ENCODE measurements at regions of chr2 and their contacts with region 1.

Region 1: GRCh38 chr2:200703127-200703925 is 108.4 kb upstream of the BZW1 start:
- DNase-seq: peak; percentile 77
- ATAC-seq: peak; percentile 64
- H3K4me3 ChIP-seq: no peak overlapping the region; a peak in 1 of 6 replicates
- H3K27ac ChIP-seq: peak overlapping the region; percentile 53
- H3K4me1 ChIP-seq: peaks cover 27% of the 10 kb centered on the region
- H3K27me3 ChIP-seq: no peaks in the 10 kb centered on the region
- CTCF ChIP-seq: peak; percentile 70
- EP300 ChIP-seq: no peak
- POLR2A ChIP-seq: no peak
- RAD21 ChIP-seq: peak; percentile 73

Region 2: GRCh38 chr2:199973703-199974102 is 729.6 kb before region 1 on chr2:
- CTCF ChIA-PET with region 1: interaction called, 5 read pairs
- POLR2A ChIA-PET with region 1: no interaction called
- in situ Hi-C with region 1: loop called (anchors 10 kb)
- intact Hi-C with region 1: loop called (anchors 1 kb)
- DNase-seq: peak; percentile 46
- ATAC-seq: peak; percentile 79
- H3K4me3 ChIP-seq: no peak overlapping the region
- H3K27ac ChIP-seq: no peak overlapping the region
- H3K4me1 ChIP-seq: peaks cover 26% of the 10 kb centered on the region
- H3K27me3 ChIP-seq: no peaks in the 10 kb centered on the region
- CTCF ChIP-seq: peak; percentile 83
- EP300 ChIP-seq: no peak
- POLR2A ChIP-seq: no peak
- RAD21 ChIP-seq: peak; percentile 71

Region 3: DNA sequence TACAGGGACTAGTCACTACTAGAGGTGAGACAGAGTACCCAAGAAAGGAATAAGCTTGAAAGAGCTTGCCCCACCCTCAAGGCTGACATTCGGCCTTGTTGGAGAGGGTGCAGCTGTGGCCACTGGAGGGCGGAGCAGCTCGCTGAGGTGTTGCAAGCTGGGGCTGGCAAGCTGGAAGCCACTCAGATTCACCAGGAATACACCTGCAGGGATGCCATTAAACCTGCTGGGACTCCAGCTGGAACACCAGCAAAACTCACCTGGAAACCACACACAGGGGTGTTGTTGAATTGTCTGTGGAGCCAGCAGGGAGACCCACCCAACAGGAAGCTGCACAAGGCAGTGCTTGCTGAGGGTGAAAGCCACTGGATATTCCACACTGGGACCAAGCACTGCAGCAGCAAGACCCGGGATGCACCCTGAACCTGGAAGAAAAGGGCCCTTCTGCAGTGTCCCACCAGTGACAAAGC is 219.6 kb before region 1 on chr2:
- CTCF ChIA-PET with region 1: interaction called, 6 read pairs
- POLR2A ChIA-PET with region 1: interaction called, 3 read pairs
- in situ Hi-C with region 1: loop called (anchors 10 kb)
- intact Hi-C with region 1: loop called (anchors 1 kb)
- DNase-seq: peak; percentile 64
- ATAC-seq: peak; percentile 86
- H3K4me3 ChIP-seq: no peak overlapping the region
- H3K27ac ChIP-seq: no peak overlapping the region
- H3K4me1 ChIP-seq: peaks cover 68% of the 10 kb centered on the region
- H3K27me3 ChIP-seq: no peaks in the 10 kb centered on the region
- CTCF ChIP-seq: peak; percentile 90
- EP300 ChIP-seq: 0 out of 4 replicates have a peak, but pooled peaks of 1 of the 2 experiments have one; percentile 30
- POLR2A ChIP-seq: peak in 1 of 2 experiments; percentile 45; a peak in 2 of 4 replicates
- RAD21 ChIP-seq: peak; percentile 62

Region 4: DNA sequence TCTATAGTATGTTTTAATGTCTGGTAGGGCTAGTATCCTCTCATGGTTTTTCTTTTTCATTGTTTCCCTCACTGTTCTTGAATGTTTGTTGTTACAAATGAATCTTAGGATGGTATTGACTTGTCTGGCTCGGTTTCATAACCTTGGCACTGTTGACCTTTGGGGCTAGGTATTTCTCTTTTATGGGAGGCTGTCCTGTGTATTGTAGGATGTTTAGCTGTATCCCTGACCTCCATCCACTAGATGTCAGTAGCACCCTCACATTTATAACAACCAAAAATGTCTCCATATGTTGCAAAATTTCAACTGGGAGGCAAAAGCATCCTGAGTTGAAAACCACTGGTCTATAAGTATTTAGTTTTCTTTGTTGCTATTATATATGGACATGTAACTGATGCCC is 124.5 kb before region 1 on chr2:
- CTCF ChIA-PET with region 1: interaction called, 43 read pairs
- POLR2A ChIA-PET with region 1: no interaction called
- in situ Hi-C with region 1: loop called (anchors 5 kb)
- intact Hi-C with region 1: loop called (anchors 1 kb)
- DNase-seq: peak; percentile 83
- ATAC-seq: peak; percentile 100
- H3K4me3 ChIP-seq: no peak overlapping the region
- H3K27ac ChIP-seq: no peak overlapping the region
- H3K4me1 ChIP-seq: peaks cover 8% of the 10 kb centered on the region
- H3K27me3 ChIP-seq: no peaks in the 10 kb centered on the region
- CTCF ChIP-seq: peak; percentile 88
- EP300 ChIP-seq: peak in 1 of 2 experiments; percentile 44; a peak in 1 of 4 replicates
- POLR2A ChIP-seq: no peak
- RAD21 ChIP-seq: peak; percentile 84

Region 5: GRCh38 chr2:200742426-200742825 is 39.1 kb after region 1 on chr2:
- CTCF ChIA-PET with region 1: no interaction called
- POLR2A ChIA-PET with region 1: no interaction called
- in situ Hi-C with region 1: loop called (anchors 5 kb)
- intact Hi-C with region 1: loop called (anchors 5 kb)
- DNase-seq: no peak
- ATAC-seq: peak; percentile 6; the same call in 1 of the 3 replicates
- H3K4me3 ChIP-seq: no peak overlapping the region
- H3K27ac ChIP-seq: peak overlapping the region; percentile 69
- H3K4me1 ChIP-seq: peaks cover 49% of the 10 kb centered on the region
- H3K27me3 ChIP-seq: peaks cover 0 to 16% of the 10 kb centered on the region in 2 experiments; a peak in 2 of 5 replicates
- CTCF ChIP-seq: no peak
- EP300 ChIP-seq: no peak
- POLR2A ChIP-seq: no peak
- RAD21 ChIP-seq: no peak

Region 6: DNA sequence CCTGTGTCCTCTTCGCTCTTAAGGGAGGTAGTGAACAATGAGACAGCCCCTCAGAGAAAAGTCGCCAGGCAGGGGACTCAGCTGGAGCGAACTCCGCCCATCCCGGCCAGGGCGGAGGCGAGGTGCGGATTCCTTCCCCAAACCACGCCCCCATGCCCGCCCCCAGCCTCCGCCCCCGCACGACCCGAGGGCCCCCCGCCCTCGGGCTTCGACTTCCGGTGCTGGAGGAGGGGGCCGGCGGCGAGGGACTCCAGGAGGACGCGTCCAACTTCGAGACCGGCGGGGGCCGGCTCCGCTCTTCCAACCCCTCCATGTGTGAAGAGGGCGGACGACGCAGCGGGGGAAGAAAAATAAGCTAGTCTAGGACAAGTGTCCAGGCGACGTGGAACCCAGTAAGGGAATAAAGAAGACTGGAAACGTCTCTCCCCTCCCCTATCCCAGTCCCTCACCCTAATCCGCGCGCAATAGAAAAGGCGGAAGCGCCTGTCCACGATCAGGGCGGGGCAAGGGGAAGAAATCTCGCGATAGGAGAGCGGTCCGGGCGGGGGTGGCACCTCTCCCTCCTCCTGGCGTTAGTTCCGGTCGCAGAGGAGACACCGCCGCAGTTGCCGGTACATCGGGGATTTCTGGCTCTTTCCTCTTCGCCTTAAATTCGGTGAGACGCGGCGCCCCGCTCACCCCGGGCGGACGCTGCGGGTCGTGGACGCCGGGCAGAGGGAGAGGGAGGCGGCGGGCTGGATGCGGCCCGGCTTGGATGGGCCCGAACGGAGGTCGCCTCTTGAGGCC is 108.2 kb after region 1 on chr2 and contains the start of gene BZW1:
- CTCF ChIA-PET with region 1: no interaction called
- POLR2A ChIA-PET with region 1: no interaction called
- in situ Hi-C with region 1: no loop called
- intact Hi-C with region 1: no loop called
- DNase-seq: peak; percentile 95
- ATAC-seq: peak; percentile 89
- H3K4me3 ChIP-seq: peak within 1 kb of the TSS; percentile 89 to 99 (median 92)
- H3K27ac ChIP-seq: peak within 1 kb of the TSS; percentile 95
- H3K4me1 ChIP-seq: peaks cover 52% of the 10 kb centered on the region
- H3K27me3 ChIP-seq: no peaks in the 10 kb centered on the region; a peak in 1 of 5 replicates
- CTCF ChIP-seq: no peak; the same call in 1 of the 2 replicates
- EP300 ChIP-seq: peak in 1 of 2 experiments; percentile 22; a peak in 1 of 4 replicates
- POLR2A ChIP-seq: peak; percentile 90 to 96
- RAD21 ChIP-seq: no peak
- total RNA-seq, gene BZW1: 384 and 709 TPM in 2 replicates